ENCODE measurements at regions of chr17 and their contacts with region 1.

Region 1: GRCh38 chr17:40399185-40399584 is 18.5 kb downstream of the TOP2A start:
- DNase-seq: no peak
- H3K4me3 ChIP-seq: no peak overlapping the region
- H3K27ac ChIP-seq: no peak overlapping the region
- H3K4me1 ChIP-seq: no peaks in the 10 kb centered on the region
- H3K27me3 ChIP-seq: no peaks in the 10 kb centered on the region
- CTCF ChIP-seq: peak in 3 of 4 experiments; percentile 55 to 69 (median 64)
- POLR2A ChIP-seq: no peak

Region 2: DNA sequence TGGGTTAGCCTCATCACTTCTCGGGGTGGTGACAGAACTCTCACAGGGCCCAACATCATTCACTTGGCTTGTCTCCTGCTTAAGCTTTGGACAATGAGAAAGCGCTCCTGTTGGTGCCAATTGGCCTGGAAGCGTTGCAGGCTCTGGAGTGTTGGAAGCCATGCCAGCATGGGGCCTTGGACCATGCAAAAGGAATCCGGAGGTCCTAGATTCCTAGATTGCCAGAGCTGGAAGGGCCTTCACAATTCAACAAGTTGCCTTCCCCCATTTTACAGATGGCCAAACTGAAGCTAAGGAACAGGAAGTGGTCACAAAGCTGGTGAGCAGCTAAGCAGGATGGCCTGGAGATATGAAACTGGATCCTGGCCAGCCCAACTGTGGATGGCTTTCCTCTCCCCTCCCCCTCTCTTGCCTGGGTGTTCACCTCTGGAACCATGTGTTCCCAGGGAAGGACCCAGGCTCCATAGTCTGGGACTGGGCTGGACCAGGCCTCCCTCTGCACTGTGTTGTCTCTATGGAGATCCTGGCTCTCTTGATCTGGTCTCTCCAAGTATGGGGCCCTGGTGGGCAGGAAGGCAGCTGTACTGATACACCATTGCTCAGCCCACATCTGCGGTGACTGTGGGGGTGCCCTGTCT is 38.0 kb after region 1 on chr17:
- intact Hi-C with region 1: loop called (anchors 5 kb)
- DNase-seq: no peak
- H3K4me3 ChIP-seq: no peak overlapping the region
- H3K27ac ChIP-seq: no peak overlapping the region
- H3K4me1 ChIP-seq: no peaks in the 10 kb centered on the region
- H3K27me3 ChIP-seq: no peaks in the 10 kb centered on the region
- CTCF ChIP-seq: no peak
- POLR2A ChIP-seq: no peak

Region 3: GRCh38 chr17:40474419-40475002 is 75.3 kb after region 1 on chr17:
- intact Hi-C with region 1: loop called (anchors 5 kb)
- DNase-seq: no peak
- H3K4me3 ChIP-seq: no peak overlapping the region
- H3K27ac ChIP-seq: no peak overlapping the region
- H3K4me1 ChIP-seq: no peaks in the 10 kb centered on the region
- H3K27me3 ChIP-seq: no peaks in the 10 kb centered on the region
- CTCF ChIP-seq: no peak
- POLR2A ChIP-seq: no peak

Region 4: DNA sequence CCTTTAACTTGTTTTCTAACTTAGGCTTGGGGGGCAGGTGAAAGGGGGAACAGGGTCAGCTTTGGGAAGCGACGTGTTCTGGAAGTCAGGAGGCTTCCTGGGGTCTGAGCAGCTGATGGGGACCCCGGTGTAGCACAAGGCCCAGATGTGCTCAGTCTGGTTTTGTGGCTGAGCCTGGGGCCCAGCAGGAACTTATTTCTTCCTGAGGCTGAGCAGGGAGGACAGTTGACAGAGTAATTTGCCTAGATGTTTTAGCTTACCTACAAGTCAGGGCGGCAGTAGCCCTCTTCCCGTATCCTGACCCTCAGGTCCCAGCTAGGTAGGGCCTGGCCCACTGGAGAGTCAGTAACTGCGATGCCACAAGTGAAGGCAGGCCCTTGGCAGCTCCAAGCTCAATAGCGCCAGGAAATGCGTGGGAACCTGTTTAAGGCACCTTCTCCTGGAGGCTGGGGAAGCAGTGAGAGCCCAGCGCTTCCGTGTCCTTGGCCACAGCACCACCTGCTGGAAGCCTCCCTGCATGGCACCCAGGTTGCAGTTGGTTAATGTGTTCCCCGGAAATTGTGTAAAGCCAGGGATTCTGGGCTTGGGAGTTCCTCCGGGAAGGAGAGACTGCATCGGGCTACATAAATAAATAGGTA is 160.9 kb after region 1 on chr17:
- intact Hi-C with region 1: loop called (anchors 2 kb)
- DNase-seq: peak; percentile 93
- H3K4me3 ChIP-seq: no peak overlapping the region
- H3K27ac ChIP-seq: peak overlapping the region; percentile 71 to 74
- H3K4me1 ChIP-seq: peaks cover 13% of the 10 kb centered on the region
- H3K27me3 ChIP-seq: no peaks in the 10 kb centered on the region
- CTCF ChIP-seq: peak; percentile 86 to 100 (median 96)
- POLR2A ChIP-seq: no peak

Region 5: DNA sequence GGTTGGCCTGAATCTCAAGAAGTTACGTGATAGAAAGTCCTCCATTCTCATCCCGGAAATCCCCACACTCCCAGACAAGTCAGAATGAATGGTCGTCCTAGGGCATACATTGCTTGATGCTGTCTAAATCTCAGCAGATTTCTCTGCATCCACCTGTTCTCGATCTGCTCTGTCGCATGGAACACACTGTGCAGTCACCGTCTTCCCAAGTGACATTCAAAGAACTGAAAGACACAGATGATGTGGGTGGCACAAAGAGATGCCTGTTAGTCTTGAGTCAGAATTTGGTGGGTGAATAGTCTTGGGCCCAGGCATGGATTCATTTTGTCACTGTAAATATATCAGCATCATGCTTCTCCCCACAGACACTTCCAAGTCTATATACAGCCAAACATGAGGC is 832.5 kb after region 1 on chr17:
- intact Hi-C with region 1: no loop called
- DNase-seq: no peak
- H3K4me3 ChIP-seq: no peak overlapping the region
- H3K27ac ChIP-seq: no peak overlapping the region
- H3K4me1 ChIP-seq: no peaks in the 10 kb centered on the region
- H3K27me3 ChIP-seq: no peaks in the 10 kb centered on the region
- CTCF ChIP-seq: no peak
- POLR2A ChIP-seq: no peak